ENCODE measurements at regions of chr3 and their contacts with region 1.

Region 1: DNA sequence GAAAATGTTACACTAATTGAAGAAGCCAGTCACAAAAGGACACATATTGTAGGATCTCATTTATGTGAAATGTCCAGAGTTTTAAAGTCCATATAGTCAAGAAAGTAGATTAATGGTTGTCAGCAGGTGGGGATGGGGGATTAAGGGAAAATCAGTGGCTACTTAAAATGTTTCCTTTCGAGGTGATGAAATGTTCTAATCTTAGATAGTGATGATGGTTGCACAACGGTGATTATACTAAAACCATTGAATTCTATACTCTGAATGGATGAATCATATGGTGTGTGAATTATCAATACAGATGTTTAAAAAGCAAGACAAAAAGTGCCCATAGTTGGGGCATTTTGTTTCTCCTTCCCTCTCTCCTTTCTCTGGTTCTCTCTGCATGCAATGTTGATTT is 164.6 kb downstream of the ATG7 start:
- DNase-seq: peak; percentile 6
- H3K4me3 ChIP-seq: no peak overlapping the region
- H3K27ac ChIP-seq: no peak overlapping the region
- H3K4me1 ChIP-seq: peaks cover 11% of the 10 kb centered on the region
- H3K27me3 ChIP-seq: no peaks in the 10 kb centered on the region
- CTCF ChIP-seq: no peak

Region 2: DNA sequence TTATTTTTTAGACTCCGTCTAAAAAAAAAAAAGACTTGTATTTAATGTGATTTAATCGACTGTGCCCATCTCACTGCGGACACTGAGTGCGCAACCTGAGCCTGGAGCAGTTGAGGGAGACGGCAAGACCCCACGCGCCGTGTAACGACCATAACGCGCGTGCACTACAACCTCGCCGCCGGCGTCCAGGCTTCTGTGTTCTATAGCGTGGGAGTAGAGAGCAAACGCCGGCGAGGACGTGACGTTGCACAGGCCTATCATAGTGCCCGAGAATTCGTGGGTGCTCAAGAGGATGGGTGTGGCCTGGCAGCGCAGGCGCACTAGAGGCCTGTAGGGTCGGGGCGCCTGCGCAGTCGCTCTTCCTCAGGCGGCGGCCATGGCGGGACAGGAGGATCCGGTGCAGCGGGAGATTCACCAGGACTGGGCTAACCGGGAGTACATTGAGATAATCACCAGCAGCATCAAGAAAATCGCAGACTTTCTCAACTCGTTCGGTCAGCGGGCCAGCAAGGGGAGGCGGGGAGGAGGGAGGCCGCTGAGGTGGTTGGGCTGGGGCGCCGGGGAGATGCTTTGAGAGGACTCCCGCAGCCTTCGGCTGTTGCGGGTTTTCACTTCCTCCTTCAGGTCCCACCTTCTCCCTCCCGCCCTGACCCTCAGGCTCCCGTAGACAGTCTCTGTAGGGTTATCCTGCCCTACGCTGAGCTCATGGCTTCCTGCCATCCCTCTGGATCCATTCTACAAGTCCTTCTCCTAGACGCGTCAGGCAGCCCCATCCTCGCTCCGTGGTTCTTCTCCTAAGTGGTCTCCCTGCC is 1321.2 kb before region 1 on chr3 and contains the start of gene BRK1:
- CTCF ChIA-PET with region 1: interaction called, 11 read pairs
- POLR2A ChIA-PET with region 1: no interaction called
- intact Hi-C with region 1: no loop called
- DNase-seq: peak; percentile 98
- H3K4me3 ChIP-seq: peak within 1 kb of the TSS; percentile 86
- H3K27ac ChIP-seq: peak within 1 kb of the TSS; percentile 70
- H3K4me1 ChIP-seq: peaks cover 9% of the 10 kb centered on the region
- H3K27me3 ChIP-seq: no peaks in the 10 kb centered on the region
- CTCF ChIP-seq: no peak
- total RNA-seq, gene BRK1: 121 and 123 TPM in 2 replicates